B cell (primary cell): ENCODE measurements at regions of chr7 and their contacts with region 1.

Region 1: DNA sequence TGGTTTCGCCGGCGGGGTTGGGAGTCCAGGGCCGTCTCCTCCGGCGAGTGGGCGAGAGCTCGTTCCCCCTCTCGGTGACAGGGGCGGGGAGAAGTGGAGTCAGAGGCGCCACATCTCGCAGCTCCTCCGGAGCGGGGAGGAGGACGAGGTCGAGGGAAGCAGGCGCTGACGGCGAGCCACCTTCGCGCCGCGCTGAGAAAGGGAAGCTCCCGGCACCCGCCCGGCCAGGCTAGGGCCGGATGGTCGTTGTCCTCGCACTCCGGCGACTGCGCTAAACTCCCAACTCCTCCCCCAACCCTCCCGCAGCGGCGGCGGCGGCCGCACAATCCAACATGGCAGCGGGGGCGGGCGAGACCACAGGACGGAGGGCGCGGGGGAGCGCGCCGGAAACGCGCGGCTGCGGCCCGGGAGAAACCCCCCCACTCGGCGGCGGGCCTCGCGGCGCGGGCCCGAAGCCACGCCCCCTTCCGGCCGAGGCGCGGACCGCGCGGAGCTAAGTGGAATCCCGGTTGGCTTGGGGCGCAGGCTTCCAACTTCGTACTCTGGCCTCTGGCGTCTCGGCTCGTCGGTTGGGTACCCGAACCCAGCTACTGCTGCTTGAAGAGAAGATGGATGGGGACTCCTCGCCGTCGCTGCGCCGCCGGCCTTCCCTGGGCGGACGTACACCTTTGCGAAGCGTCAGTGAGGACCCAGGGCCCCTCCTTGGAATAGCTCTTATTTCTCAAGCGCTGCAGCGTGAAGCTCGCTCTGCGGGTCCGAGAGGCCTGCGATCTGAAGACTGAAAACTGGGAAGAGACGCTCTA is at the start of gene WASL:
- DNase-seq: peak; percentile 94
- ATAC-seq: peak; percentile 84
- H3K4me3 ChIP-seq: peak within 1 kb of the TSS; percentile 78 to 92 (median 90)
- H3K4me3 Mint-ChIP-seq: peak within 1 kb of the TSS; percentile 98
- H3K27ac ChIP-seq: peak within 1 kb of the TSS; percentile 80 to 84
- H3K27ac Mint-ChIP-seq: peak within 1 kb of the TSS; percentile 94
- H3K4me1 ChIP-seq: peaks cover 22 to 32% of the 10 kb centered on the region in 2 donors
- H3K4me1 Mint-ChIP-seq: peaks cover 43% of the 10 kb centered on the region
- H3K27me3 ChIP-seq: no peaks in the 10 kb centered on the region
- H3K27me3 Mint-ChIP-seq: no peaks in the 10 kb centered on the region
- CTCF ChIP-seq: no peak
- total RNA-seq, gene WASL: 9.9 and 10.4 TPM in 2 replicates

Region 2: DNA sequence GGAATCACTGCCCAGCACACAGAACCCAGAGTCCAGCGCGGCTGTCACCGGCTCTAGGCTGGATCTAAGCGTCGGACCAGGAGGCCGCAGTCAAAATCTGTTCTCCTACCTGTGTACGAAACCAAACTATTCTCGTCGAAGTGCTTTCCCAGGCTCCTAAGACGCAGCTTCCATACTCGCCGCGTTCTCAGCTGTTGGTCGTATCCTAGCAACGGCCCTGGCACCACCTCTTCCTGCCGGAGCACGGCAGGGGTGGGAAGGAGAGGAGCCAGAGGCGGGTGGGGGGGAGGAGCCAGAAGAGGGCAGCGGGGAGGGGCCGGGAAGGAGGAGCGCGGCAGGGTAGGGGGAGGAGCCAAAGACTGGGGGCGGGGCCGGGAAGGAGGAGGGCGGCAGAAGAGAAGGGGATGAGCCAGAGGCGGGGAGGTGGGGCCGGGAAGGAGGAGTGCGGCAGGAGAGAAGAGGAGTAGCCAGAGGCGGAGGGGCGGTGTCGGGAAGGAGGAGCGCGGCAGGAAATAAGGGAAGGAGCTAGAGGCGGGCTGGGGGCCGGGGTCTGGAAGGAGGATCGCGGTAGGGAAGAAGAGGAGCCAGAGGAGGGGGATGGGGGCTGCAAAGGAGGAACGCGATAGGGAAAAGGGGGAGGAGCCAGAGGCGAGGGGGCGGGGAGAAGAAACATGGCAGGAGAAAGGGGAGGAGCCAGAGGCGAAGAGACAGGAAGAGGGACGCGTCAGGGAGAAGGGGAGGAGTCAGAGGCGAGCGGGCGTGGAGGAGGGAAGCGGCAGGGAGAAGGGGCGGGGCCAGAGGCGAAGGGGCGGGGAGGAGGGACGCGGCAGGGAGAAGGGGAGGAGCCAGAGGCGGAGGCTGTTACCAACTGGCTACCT is 214.3 kb before region 1 on chr7 and contains the start of gene IQUB:
- CTCF ChIA-PET with region 1: no interaction called
- POLR2A ChIA-PET with region 1: no interaction called
- intact Hi-C with region 1: loop called (anchors 1 kb)
- DNase-seq: peak; percentile 92
- ATAC-seq: peak; percentile 82
- H3K4me3 ChIP-seq: peak within 1 kb of the TSS; percentile 67 to 81 (median 71)
- H3K4me3 Mint-ChIP-seq: peak within 1 kb of the TSS; percentile 93
- H3K27ac ChIP-seq: peak within 1 kb of the TSS; percentile 41 to 69
- H3K27ac Mint-ChIP-seq: peak within 1 kb of the TSS; percentile 5
- H3K4me1 ChIP-seq: peaks cover 13 to 19% of the 10 kb centered on the region in 2 donors
- H3K4me1 Mint-ChIP-seq: peaks cover 20% of the 10 kb centered on the region
- H3K27me3 ChIP-seq: peaks cover 0 to 8% (median 3%) of the 10 kb centered on the region in 4 experiments
- H3K27me3 Mint-ChIP-seq: peaks cover 8% of the 10 kb centered on the region
- CTCF ChIP-seq: no peak
- total RNA-seq, gene IQUB: 0.12 and 0.27 TPM in 2 replicates

Region 3: GRCh38 chr7:123655614-123656013 is 93.3 kb before region 1 on chr7 and contains the start of gene LMOD2:
- CTCF ChIA-PET with region 1: no interaction called
- POLR2A ChIA-PET with region 1: no interaction called
- intact Hi-C with region 1: no loop called
- DNase-seq: no peak
- ATAC-seq: no peak
- H3K4me3 ChIP-seq: no peak within 1 kb of the TSS
- H3K4me3 Mint-ChIP-seq: no peak within 1 kb of the TSS
- H3K27ac ChIP-seq: no peak within 1 kb of the TSS
- H3K27ac Mint-ChIP-seq: no peak within 1 kb of the TSS
- H3K4me1 ChIP-seq: no peaks in the 10 kb centered on the region
- H3K4me1 Mint-ChIP-seq: no peaks in the 10 kb centered on the region
- H3K27me3 ChIP-seq: peaks cover 0 to 4% (median 0%) of the 10 kb centered on the region in 4 experiments
- H3K27me3 Mint-ChIP-seq: peaks cover 27% of the 10 kb centered on the region
- CTCF ChIP-seq: no peak
- total RNA-seq, gene LMOD2: not detected in 2 replicates

Region 4: GRCh38 chr7:123705211-123705901 is 43.6 kb before region 1 on chr7:
- CTCF ChIA-PET with region 1: interaction called, 8 read pairs
- POLR2A ChIA-PET with region 1: no interaction called
- intact Hi-C with region 1: loop called (anchors 2 kb)
- DNase-seq: no peak
- ATAC-seq: no peak
- H3K4me3 ChIP-seq: no peak overlapping the region
- H3K4me3 Mint-ChIP-seq: no peak overlapping the region
- H3K27ac ChIP-seq: no peak overlapping the region
- H3K27ac Mint-ChIP-seq: no peak overlapping the region
- H3K4me1 ChIP-seq: no peaks in the 10 kb centered on the region
- H3K4me1 Mint-ChIP-seq: no peaks in the 10 kb centered on the region
- H3K27me3 ChIP-seq: no peaks in the 10 kb centered on the region
- H3K27me3 Mint-ChIP-seq: no peaks in the 10 kb centered on the region
- CTCF ChIP-seq: no peak

Region 5: DNA sequence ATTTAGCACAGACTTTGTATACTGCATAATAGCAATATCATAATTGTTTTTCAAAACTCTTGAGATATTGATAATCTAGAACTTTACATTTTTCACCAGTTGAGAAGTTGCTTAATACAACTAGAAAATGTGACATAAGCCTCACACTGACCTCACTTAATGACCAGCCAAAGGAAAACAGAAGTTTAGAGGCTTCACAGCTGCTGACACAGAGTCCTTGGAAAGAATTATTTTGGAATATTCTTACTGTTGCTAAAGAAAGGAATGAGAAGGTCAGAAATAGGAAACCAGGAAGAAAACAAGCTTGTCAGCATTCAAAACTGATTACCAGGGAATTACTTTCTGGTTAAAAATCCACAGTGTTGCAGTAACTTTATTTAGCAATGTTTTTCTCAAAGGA is 35.3 kb after region 1 on chr7:
- CTCF ChIA-PET with region 1: no interaction called
- POLR2A ChIA-PET with region 1: no interaction called
- intact Hi-C with region 1: no loop called
- DNase-seq: no peak
- ATAC-seq: no peak
- H3K4me3 ChIP-seq: no peak overlapping the region
- H3K4me3 Mint-ChIP-seq: no peak overlapping the region
- H3K27ac ChIP-seq: no peak overlapping the region
- H3K27ac Mint-ChIP-seq: no peak overlapping the region
- H3K4me1 ChIP-seq: no peaks in the 10 kb centered on the region
- H3K4me1 Mint-ChIP-seq: no peaks in the 10 kb centered on the region
- H3K27me3 ChIP-seq: no peaks in the 10 kb centered on the region
- H3K27me3 Mint-ChIP-seq: peaks cover 10% of the 10 kb centered on the region
- CTCF ChIP-seq: no peak

Region 6: GRCh38 chr7:123860848-123861247 is 111.9 kb after region 1 on chr7:
- CTCF ChIA-PET with region 1: no interaction called
- POLR2A ChIA-PET with region 1: no interaction called
- intact Hi-C with region 1: no loop called
- DNase-seq: no peak
- ATAC-seq: no peak
- H3K4me3 ChIP-seq: no peak overlapping the region
- H3K4me3 Mint-ChIP-seq: no peak overlapping the region
- H3K27ac ChIP-seq: no peak overlapping the region
- H3K27ac Mint-ChIP-seq: no peak overlapping the region
- H3K4me1 ChIP-seq: no peaks in the 10 kb centered on the region
- H3K4me1 Mint-ChIP-seq: no peaks in the 10 kb centered on the region
- H3K27me3 ChIP-seq: peaks cover 0 to 3% (median 0%) of the 10 kb centered on the region in 4 experiments
- H3K27me3 Mint-ChIP-seq: peaks cover 9% of the 10 kb centered on the region
- CTCF ChIP-seq: no peak

Region 7: GRCh38 chr7:124489789-124490324 is 740.9 kb after region 1 on chr7:
- CTCF ChIA-PET with region 1: no interaction called
- POLR2A ChIA-PET with region 1: no interaction called
- intact Hi-C with region 1: no loop called
- DNase-seq: no peak
- ATAC-seq: no peak
- H3K4me3 ChIP-seq: no peak overlapping the region
- H3K4me3 Mint-ChIP-seq: no peak overlapping the region
- H3K27ac ChIP-seq: no peak overlapping the region
- H3K27ac Mint-ChIP-seq: no peak overlapping the region
- H3K4me1 ChIP-seq: no peaks in the 10 kb centered on the region
- H3K4me1 Mint-ChIP-seq: no peaks in the 10 kb centered on the region
- H3K27me3 ChIP-seq: no peaks in the 10 kb centered on the region
- H3K27me3 Mint-ChIP-seq: no peaks in the 10 kb centered on the region
- CTCF ChIP-seq: no peak